Activated B cell treated with CpG ODN at 0.5 μM for 24 hours (primary cell): ENCODE measurements at regions of chr17 and their contacts with region 1.

Region 1: DNA sequence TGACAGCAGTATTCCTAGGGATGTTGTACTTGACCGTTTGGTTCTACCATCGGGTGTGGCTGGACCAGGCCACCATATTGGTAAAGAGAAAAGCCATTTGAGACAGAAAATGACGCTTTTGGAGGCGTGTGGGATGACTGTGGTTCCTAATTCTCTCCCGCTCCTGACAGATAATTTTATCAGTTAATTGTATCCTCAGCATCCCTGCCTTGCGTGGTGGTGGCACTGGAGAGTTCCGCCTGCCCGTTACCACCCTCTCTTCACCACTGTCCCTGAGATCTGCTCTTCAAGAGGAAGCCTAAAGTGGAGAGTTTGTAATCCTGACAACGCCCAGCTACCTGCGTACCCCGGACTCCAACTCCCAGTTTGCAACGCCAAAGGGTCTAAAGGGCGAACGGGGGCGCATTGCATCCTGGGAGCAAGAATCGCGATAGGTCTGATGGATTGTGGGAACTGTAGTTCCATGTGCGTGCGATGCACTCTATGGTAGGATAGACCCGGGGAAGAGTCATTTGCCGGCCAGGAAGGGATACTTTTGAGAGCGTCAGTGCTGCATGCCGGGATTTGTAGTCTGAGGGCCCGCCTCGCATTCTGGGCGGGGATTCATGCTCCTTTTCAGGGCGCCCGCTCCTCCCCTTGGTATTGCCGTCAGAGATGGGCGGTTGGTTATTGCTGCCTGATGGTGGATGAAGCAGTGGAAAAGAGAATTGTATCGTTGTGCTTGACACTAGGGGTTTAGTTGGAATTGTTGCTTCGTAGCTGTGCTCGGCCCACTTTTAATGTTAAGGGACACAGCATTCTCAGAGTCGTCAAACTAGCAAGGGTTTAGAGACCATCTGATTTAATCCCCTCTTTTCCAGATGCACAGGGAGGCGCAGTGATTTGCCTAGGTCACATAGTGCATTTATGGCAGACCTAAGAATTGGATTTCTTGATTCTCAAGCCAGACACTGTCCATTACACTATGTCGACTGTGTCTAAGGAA is 965 bp upstream of the PHF12 start:
- DNase-seq: peak; percentile 82
- ATAC-seq: peak; percentile 68
- H3K4me3 Mint-ChIP-seq: no peak overlapping the region
- H3K27ac Mint-ChIP-seq: no peak overlapping the region
- H3K4me1 Mint-ChIP-seq: peaks cover 17% of the 10 kb centered on the region
- H3K27me3 Mint-ChIP-seq: no peaks in the 10 kb centered on the region
- CTCF ChIP-seq: no peak

Region 2: GRCh38 chr17:28357061-28357900 is 595.0 kb before region 1 on chr17 and contains the start of gene POLDIP2:
- CTCF ChIA-PET with region 1: no interaction called
- POLR2A ChIA-PET with region 1: interaction called, 4 read pairs
- intact Hi-C with region 1: loop called (anchors 1 kb)
- DNase-seq: peak; percentile 96
- ATAC-seq: peak; percentile 98
- H3K4me3 Mint-ChIP-seq: peak within 1 kb of the TSS; percentile 97
- H3K27ac Mint-ChIP-seq: peak within 1 kb of the TSS; percentile 93
- H3K4me1 Mint-ChIP-seq: peaks cover 26% of the 10 kb centered on the region
- H3K27me3 Mint-ChIP-seq: no peaks in the 10 kb centered on the region
- CTCF ChIP-seq: no peak
- total RNA-seq, gene POLDIP2: 60.5 and 65.2 TPM in 2 replicates

Region 3: DNA sequence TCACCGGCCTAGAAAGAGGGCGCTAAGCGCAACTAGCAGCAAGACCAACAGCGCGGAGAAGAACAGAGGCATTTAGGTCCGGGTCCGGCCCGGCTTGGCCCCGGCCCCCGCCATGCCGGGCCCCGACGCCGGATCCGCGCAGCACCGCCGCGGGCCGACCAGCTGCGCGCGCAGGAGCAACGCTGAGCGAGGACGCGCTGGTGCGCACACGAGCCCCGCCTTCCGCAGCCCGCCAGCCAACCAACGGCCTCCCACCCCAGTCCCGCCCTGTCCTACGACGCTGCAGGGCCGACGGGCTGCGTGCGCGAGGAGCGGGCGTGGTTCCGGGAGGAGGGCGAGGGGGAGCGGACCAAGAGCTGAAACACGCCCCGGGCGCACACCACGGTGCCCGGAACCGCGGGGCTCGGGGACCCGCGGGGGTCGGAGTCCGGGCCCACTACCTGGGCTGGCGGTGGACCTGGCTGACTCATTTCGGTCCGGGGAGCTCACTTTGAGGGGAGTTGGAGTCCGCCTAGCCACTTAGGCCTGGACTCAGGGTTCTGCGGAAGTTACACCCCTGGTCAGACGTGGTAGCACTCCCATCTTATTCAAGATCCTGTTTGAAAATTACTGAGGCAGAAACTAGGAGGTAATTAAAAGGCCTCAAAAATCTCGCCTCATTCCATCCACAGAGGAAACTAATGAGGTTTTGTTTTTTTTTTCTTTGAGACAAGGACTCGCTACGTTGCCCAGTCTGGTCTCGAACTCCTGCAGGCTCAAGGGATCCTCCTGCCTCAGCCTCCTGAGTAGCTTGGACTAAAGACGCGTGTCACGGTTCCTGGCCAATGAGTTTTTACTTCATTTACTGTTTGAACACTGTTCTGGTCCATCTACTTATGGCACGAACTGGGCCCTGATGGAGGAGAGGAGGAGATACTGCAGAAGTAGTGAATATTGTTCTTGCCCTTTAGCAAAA is 307.0 kb before region 1 on chr17 and contains the start of gene BLTP2:
- CTCF ChIA-PET with region 1: interaction called, 7 read pairs
- POLR2A ChIA-PET with region 1: interaction called, 13 read pairs
- intact Hi-C with region 1: loop called (anchors 1 kb)
- DNase-seq: peak; percentile 91
- ATAC-seq: peak; percentile 97
- H3K4me3 Mint-ChIP-seq: peak within 1 kb of the TSS; percentile 97
- H3K27ac Mint-ChIP-seq: peak within 1 kb of the TSS; percentile 91
- H3K4me1 Mint-ChIP-seq: peaks cover 40% of the 10 kb centered on the region
- H3K27me3 Mint-ChIP-seq: no peaks in the 10 kb centered on the region
- CTCF ChIP-seq: no peak
- total RNA-seq, gene BLTP2: 162 and 182 TPM in 2 replicates

Region 4: DNA sequence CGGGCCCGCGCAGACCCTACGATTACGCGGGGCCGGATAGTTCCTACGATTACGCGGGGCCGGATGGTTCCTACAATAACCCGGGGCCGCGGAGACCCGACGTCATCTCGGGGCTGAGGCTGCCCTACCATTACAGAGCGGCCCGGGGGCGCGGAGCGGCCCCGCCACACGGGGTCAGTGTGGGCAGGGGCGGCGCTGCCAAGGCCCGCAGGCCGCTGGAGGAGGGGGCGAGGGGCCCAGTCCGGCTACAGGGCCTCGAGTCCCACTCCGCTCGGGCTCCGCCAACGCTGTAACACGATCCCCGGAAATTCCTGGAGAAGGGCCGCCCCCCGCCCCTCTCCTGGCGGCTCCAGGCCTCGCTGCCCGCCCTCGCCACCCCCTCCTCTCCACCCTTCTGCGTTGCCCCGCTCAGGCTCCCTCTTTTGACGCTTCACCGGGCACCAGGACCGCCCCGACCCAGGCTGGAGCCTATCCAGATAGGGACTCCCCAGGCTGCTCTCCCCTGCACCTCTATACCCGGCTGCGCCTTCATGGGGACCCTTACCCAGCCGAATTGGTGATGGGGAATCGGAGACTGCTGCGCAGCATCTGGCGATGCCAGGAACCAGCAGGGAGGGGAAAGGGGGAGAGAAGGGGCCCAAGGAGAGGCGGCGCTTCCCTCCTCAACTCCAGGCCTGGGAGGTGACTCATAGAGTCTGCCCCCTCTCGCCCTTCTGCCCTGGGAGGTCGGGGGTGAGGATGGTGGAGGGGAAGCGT is 234.5 kb before region 1 on chr17 and contains the start of gene RAB34:
- CTCF ChIA-PET with region 1: interaction called, 6 read pairs
- POLR2A ChIA-PET with region 1: interaction called, 45 read pairs
- intact Hi-C with region 1: loop called (anchors 1 kb)
- DNase-seq: peak; percentile 46
- ATAC-seq: peak; percentile 14
- H3K4me3 Mint-ChIP-seq: peak within 1 kb of the TSS; percentile 79
- H3K27ac Mint-ChIP-seq: peak within 1 kb of the TSS; percentile 85
- H3K4me1 Mint-ChIP-seq: peaks cover 49% of the 10 kb centered on the region
- H3K27me3 Mint-ChIP-seq: no peaks in the 10 kb centered on the region
- CTCF ChIP-seq: no peak
- total RNA-seq, gene RAB34: 21.3 and 23.9 TPM in 2 replicates

Region 5: GRCh38 chr17:28763804-28764266 is 188.4 kb before region 1 on chr17:
- CTCF ChIA-PET with region 1: interaction called, 34 read pairs
- POLR2A ChIA-PET with region 1: interaction called, 9 read pairs
- intact Hi-C with region 1: loop called (anchors 1 kb)
- DNase-seq: no peak
- ATAC-seq: peak; percentile 86
- H3K4me3 Mint-ChIP-seq: no peak overlapping the region
- H3K27ac Mint-ChIP-seq: no peak overlapping the region
- H3K4me1 Mint-ChIP-seq: peaks cover 10% of the 10 kb centered on the region
- H3K27me3 Mint-ChIP-seq: no peaks in the 10 kb centered on the region
- CTCF ChIP-seq: peak; percentile 80

Region 6: DNA sequence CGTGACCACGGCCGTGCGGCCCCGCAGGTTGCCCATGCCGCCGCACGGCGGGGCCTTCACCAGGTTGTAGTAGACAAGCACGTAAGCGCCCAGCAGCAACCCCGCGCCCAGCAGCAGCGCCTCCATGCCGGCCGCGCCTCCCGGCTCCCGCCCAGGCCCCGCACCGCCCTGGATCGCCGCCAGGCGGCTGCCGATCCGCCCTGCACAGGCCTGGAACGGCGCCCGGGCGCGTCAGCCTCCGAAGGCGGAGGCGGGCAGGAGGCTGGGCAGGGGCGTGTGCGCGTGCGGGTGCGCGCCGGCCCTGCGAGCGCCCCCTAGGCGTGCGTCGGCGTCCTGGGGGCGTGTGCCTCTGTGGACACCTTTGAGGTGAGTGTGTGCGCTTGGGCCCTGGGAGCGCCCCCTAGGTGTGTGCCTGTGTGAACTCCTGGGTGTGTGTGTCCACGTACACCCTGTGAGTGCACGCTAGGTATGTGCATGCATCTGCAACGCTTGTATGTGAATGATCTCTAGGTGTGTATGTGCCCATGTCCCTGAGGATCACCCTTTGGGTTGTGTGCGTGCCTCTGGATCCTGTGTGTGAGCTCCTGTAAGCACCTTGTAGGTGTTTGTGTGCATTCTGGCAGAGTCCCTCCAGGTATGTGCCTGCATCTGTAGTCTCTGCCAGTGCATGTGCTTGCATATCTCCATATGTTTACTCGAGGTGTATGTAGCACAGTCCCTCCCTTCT is 49.3 kb before region 1 on chr17 and contains the start of gene DHRS13:
- CTCF ChIA-PET with region 1: interaction called, 3 read pairs
- POLR2A ChIA-PET with region 1: interaction called, 71 read pairs
- intact Hi-C with region 1: loop called (anchors 1 kb)
- DNase-seq: peak; percentile 97
- ATAC-seq: peak; percentile 90
- H3K4me3 Mint-ChIP-seq: peak within 1 kb of the TSS; percentile 82
- H3K27ac Mint-ChIP-seq: peak within 1 kb of the TSS; percentile 77
- H3K4me1 Mint-ChIP-seq: peaks cover 37% of the 10 kb centered on the region
- H3K27me3 Mint-ChIP-seq: no peaks in the 10 kb centered on the region
- CTCF ChIP-seq: peak; percentile 82
- total RNA-seq, gene DHRS13: 32.0 and 39.6 TPM in 2 replicates

Region 7: GRCh38 chr17:29020576-29020975 is 68.3 kb after region 1 on chr17:
- CTCF ChIA-PET with region 1: no interaction called
- POLR2A ChIA-PET with region 1: no interaction called
- intact Hi-C with region 1: no loop called
- DNase-seq: no peak
- ATAC-seq: no peak
- H3K4me3 Mint-ChIP-seq: no peak overlapping the region
- H3K27ac Mint-ChIP-seq: no peak overlapping the region
- H3K4me1 Mint-ChIP-seq: peaks cover 13% of the 10 kb centered on the region
- H3K27me3 Mint-ChIP-seq: peaks cover 54% of the 10 kb centered on the region
- CTCF ChIP-seq: no peak

Region 8: DNA sequence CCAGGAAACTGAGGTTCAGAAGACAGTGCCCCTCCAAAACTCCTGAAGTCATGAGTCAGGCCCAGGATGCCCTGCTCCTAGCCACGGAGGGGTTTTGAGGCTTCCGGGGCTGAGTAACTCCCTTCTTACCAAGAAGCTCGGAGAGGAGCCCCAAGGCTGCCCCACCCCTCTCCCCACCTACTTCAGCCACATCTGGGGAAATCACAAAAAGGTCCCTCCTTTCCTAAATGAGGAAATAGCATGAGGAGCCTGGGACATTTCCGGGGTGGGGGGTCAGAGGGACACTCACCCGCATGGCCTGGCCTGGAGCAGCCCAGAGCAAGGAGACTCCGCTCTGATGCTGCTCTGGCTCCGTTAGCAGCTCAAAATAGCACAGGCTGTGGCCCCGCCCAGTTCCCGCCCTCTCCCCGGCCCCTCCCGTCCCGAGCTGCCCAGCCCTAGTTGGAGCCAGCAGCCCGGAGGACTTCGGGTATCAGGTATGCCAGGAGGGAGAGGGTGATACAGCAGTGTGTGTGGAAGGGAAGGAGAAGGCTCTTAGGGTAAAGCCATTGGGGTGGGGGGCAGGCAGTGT is 187.9 kb after region 1 on chr17:
- CTCF ChIA-PET with region 1: no interaction called
- POLR2A ChIA-PET with region 1: interaction called, 9 read pairs
- intact Hi-C with region 1: loop called (anchors 1 kb)
- DNase-seq: peak; percentile 51
- ATAC-seq: peak; percentile 62
- H3K4me3 Mint-ChIP-seq: peak overlapping the region; percentile 88
- H3K27ac Mint-ChIP-seq: peak overlapping the region; percentile 97
- H3K4me1 Mint-ChIP-seq: peaks cover 72% of the 10 kb centered on the region
- H3K27me3 Mint-ChIP-seq: no peaks in the 10 kb centered on the region
- CTCF ChIP-seq: no peak

Region 9: DNA sequence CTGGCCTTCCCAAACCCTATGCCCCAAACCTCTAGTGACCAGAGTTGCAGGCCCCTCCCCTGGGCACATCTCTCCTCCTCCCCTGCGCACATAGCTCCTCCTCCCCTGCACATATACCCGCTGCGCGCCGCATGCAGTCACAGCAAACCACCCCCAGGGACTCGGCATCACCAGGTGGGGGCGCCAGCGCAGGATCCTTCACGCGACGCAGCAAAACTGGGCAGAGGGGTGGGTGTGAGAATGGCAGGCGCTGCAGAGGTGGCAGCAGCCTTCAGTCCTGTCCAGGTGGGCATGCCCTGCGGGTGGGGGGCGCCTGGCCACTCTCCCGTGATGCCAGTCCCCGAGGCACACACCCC is 664.8 kb after region 1 on chr17:
- CTCF ChIA-PET with region 1: no interaction called
- POLR2A ChIA-PET with region 1: no interaction called
- intact Hi-C with region 1: no loop called
- DNase-seq: peak; percentile 75
- ATAC-seq: peak; percentile 79
- H3K4me3 Mint-ChIP-seq: peak overlapping the region; percentile 83
- H3K27ac Mint-ChIP-seq: peak overlapping the region; percentile 72
- H3K4me1 Mint-ChIP-seq: peaks cover 46% of the 10 kb centered on the region
- H3K27me3 Mint-ChIP-seq: peaks cover 3% of the 10 kb centered on the region
- CTCF ChIP-seq: no peak